RWPE1 (cell line): ENCODE measurements at regions of chr11 and their contacts with region 1.

Region 1: DNA sequence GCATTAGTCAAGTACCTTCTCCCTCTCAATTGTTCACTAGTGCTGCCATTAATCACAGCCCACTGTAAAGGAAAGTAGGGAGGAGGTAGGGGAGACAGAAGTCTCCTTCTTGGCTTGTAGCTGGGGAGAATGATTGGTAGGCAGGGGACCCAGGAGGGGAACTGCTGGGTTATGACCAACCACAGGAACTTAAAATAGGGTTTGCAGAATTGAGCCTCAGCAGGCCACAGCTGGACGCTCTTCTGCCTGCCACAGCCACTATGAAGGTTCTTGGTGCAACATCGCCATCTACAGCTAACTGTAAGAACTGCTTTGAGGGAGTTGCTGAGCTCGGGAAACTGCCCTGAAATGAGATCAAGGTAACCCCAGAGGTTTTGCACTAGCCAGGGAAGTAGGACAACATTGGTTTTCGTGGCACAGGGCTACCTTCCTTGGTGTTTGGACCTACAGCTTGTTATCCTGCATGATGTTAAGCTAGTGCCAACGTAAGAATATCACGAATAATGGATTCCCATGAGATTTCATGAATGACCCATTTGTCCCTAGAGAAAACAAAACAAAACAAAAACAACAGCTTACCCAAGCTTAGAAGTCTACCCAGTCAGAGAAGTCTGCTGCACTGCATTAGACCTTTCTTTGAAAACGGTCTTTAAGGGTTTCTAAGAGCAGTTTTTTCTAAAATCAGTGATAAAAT is 787.1 kb upstream of the API5 start:
- DNase-seq: peak; percentile 23
- H3K27ac ChIP-seq: no peak overlapping the region
- CTCF ChIP-seq: peak; percentile 77

Region 2: GRCh38 chr11:41461057-41461681 is 1063.5 kb before region 1 on chr11:
- CTCF ChIA-PET with region 1: interaction called, 14 read pairs
- POLR2A ChIA-PET with region 1: no interaction called
- DNase-seq: peak; percentile 15
- H3K27ac ChIP-seq: no peak overlapping the region
- CTCF ChIP-seq: peak; percentile 79